ENCODE measurements at regions of chrX and their contacts with region 1.

Region 1: DNA sequence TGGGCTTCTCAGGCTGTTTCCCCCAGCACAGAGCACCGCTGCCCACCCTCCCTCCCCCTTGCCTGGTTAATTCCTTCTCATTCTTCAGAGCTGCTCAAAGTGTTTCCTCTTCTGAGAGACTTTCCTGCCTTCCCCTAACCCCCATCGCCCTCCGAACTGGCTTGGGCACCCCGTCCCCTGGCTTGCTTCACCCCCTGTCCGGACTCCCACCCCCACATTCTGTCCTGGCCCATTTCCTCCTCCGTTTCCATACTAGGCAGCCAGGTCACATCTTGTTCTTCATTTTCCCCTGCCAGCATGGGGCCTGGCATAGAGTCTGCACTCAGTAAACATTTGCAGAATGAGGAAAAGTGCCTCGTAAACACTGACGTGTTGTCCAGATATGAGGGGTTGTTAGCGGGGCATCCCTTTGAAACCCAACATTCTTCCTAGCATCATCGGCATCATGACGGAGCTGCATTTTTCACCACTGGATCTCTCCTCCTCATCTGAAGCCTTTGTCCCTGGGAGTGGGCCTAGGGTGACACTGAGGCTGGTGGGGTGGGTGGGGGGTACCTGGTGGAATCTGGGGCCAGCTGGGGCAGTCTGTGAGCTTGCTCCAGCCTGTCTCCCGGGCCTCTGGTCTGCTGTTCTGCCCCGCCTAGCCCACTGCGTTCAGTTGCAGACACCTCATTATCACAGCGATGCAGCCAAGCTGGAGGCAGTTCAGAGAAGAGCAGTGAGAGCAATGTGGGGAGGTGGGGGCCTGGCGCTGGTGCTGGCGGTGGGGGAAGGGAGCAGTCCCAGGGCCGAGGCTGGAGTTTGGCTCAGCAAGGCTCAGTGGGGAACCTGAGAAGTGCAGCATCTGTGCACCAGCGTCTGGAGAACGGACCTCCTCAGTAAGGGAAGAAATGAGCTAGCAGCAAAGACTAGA is 149.4 kb upstream of the PJA1 start:
- DNase-seq: peak in 1 of 10 donors; percentile 31
- H3K4me3 ChIP-seq: no peak overlapping the region
- H3K27ac ChIP-seq: no peak overlapping the region
- H3K27me3 ChIP-seq: peaks cover 0 to 78% (median 21%) of the 10 kb centered on the region in 45 donors
- CTCF ChIP-seq: no peak

Region 2: GRCh38 chrX:69257499-69258127 is 57.1 kb before region 1 on chrX:
- intact Hi-C with region 1: loop called in 1 of 2 experiments (anchors 10 kb)
- DNase-seq: peak in 1 of 10 donors; percentile 35
- H3K4me3 ChIP-seq: no peak overlapping the region
- H3K27ac ChIP-seq: no peak overlapping the region
- H3K27me3 ChIP-seq: peaks cover 0 to 74% (median 21%) of the 10 kb centered on the region in 45 donors
- CTCF ChIP-seq: no peak